ENCODE measurements at regions of chr3 and their contacts with region 1.

Region 1: DNA sequence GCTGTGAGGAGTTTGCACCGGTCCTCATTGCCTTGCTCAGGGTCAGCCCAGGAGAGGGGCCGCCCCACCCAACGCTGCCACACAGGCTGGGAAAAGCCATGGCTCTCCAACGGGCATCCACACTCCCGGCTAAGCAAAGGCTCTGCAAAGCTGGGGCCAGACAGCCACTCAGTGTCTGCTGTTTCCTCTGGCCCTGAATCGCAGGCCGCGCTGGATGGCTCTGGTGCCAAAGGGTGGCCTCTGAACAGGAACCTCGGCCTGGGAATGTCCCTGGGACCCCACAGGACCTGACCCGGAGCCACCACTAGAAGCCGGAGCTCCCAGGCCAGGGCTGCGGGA is 42.9 kb downstream of the RPN1 start:
- DNase-seq: no peak
- H3K4me3 ChIP-seq: peak overlapping the region in 2 of 3 experiments; percentile 48 to 53
- H3K27ac ChIP-seq: no peak overlapping the region
- H3K4me1 ChIP-seq: peaks cover 5% of the 10 kb centered on the region
- H3K27me3 ChIP-seq: no peaks in the 10 kb centered on the region
- CTCF ChIP-seq: no peak
- POLR2A ChIP-seq: no peak

Region 2: DNA sequence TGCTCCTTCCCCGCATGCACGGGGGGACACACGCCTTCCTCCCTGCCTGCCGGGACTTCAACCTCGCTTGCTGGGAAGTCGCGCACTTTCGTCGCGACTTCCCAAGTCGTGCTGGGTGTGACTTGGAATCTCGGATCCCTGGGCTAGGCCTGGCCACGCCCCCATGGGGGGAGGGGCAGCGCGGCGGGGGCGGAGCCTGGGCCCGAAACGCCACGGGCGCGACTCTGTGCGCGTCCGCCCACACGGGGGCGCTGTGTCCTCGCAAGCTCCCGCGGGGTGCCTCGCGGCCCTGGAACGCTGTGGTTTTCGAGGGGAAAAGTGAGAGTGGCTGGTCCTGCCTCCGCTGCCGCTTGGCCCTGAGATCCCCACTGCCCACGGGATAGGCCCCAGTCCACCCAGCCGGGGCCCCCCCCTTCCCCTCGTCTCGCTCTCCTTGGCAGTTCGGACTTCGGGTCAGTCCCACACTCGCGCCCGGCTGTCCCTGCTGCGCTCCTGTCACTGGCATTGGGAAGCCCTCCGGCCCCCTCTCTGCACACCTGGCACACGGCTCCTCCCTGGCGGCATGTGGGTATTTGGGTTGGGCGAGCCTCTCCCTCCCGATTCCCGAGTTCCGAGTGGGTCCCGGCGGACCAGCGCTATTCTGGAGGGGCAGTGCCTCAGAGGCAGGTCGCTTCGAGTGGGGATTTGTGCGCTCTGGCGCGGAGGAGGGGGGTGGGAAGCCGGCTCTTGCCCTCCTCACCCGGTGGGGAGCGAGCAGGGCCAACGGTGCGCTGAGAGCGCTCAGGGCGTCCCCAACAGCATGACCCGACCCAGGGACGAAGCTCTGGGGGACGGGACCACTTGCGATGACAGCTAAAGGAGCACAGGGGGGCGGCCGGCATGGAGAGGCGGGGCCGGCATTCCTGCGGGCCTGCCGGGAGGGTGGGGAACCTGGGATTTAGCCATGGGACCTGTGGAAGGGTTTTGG is 531.9 kb before region 1 on chr3:
- CTCF ChIA-PET with region 1: no interaction called
- POLR2A ChIA-PET with region 1: no interaction called
- dilution Hi-C with region 1: no loop called
- intact Hi-C with region 1: loop called (anchors 2 kb)
- DNase-seq: peak; percentile 94
- H3K4me3 ChIP-seq: peak overlapping the region in 2 of 3 experiments; percentile 16 to 44
- H3K27ac ChIP-seq: peak overlapping the region; percentile 33
- H3K4me1 ChIP-seq: peaks cover 51% of the 10 kb centered on the region
- H3K27me3 ChIP-seq: no peaks in the 10 kb centered on the region
- CTCF ChIP-seq: peak; percentile 95 to 98
- POLR2A ChIP-seq: peak; percentile 55

Region 3: DNA sequence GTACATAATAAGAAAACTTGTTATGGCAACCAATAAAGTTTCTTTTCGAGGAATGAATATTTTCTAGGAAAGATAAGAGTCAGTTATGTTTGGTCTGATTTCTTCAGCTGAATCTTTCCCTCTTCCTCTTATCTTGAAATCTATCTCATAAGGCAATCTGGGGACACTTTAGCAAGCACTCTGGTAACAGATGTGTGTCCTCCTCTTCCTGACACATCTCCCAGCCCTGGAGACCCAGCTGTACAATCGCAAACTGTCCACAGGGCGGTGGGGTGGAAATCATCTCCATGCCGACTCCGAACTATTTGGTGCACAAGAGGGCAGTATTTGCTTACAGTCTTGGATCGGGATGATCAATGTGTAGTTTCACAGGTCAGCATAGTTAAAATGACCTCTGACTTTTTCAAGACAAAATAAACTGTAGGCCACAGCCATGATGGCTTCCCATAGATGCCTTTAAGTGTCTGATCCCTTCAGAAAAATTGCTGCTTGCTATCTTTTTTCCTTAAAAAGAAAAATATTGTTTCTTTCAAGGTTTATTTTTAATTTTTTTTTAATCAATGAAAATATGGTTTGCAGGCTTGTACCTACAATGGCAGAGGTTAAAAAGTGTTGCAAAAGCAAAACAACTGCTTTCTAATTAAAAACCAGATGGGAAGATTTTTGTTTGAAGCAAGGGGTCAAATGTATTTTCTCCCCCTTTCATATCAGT is 436.7 kb before region 1 on chr3:
- CTCF ChIA-PET with region 1: interaction called, 27 read pairs
- POLR2A ChIA-PET with region 1: no interaction called
- dilution Hi-C with region 1: no loop called
- intact Hi-C with region 1: loop called (anchors 1 kb)
- DNase-seq: peak; percentile 78
- H3K4me3 ChIP-seq: no peak overlapping the region
- H3K27ac ChIP-seq: no peak overlapping the region
- H3K4me1 ChIP-seq: no peaks in the 10 kb centered on the region
- H3K27me3 ChIP-seq: no peaks in the 10 kb centered on the region
- CTCF ChIP-seq: peak; percentile 73 to 83
- POLR2A ChIP-seq: no peak

Region 4: GRCh38 chr3:128226795-128227395 is 380.8 kb before region 1 on chr3:
- CTCF ChIA-PET with region 1: interaction called, 19 read pairs
- POLR2A ChIA-PET with region 1: no interaction called
- dilution Hi-C with region 1: no loop called
- intact Hi-C with region 1: loop called (anchors 1 kb)
- DNase-seq: peak; percentile 59
- H3K4me3 ChIP-seq: no peak overlapping the region
- H3K27ac ChIP-seq: no peak overlapping the region
- H3K4me1 ChIP-seq: no peaks in the 10 kb centered on the region
- H3K27me3 ChIP-seq: no peaks in the 10 kb centered on the region
- CTCF ChIP-seq: peak; percentile 89 to 98
- POLR2A ChIP-seq: no peak

Region 5: DNA sequence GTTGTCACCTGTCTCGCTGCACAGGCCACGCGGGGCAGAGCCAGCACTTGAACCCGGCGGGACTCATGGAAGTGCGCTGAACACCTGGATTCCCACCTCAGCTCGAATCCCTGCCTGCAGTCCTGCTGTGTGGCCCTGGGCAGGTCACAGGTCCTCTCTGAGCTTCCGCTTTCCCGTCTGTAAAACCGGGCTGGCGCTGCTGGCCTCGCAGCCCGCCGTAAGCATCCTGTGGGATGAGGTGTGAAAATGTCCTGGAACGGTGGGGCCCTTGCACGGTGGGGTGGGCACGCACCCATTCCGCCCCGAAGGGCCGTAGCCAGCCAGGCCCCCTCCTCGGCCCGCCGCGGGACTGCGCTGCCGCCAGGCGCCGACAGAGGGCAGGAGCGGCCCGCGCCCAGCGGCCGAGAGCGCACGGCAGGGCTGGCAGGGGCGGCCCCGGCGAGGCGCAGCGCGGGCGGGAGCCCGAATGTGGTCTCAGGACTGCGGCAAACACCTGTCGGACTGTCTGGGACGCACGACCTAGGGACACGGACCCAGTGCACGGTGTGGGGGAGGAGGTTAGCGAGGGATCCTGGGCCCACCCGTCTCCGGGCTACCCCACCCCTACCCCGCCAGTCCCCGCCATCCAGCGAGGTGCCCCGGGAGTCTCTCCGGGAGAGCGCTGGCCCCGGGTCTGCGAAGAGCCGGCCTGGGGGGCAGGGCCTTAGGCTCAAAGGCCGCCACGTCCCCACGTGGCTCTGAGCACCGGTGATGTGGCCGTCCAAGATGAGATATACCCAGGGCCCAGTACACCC is 181.4 kb before region 1 on chr3:
- CTCF ChIA-PET with region 1: interaction called, 76 read pairs
- POLR2A ChIA-PET with region 1: no interaction called
- dilution Hi-C with region 1: no loop called
- intact Hi-C with region 1: loop called (anchors 1 kb)
- DNase-seq: peak; percentile 41
- H3K4me3 ChIP-seq: no peak overlapping the region
- H3K27ac ChIP-seq: no peak overlapping the region
- H3K4me1 ChIP-seq: peaks cover 3% of the 10 kb centered on the region
- H3K27me3 ChIP-seq: peaks cover 0 to under 1% of the 10 kb centered on the region in 2 experiments
- CTCF ChIP-seq: peak; percentile 75 to 96
- POLR2A ChIP-seq: no peak

Region 6: GRCh38 chr3:128473180-128473519 is 134.5 kb before region 1 on chr3:
- CTCF ChIA-PET with region 1: no interaction called
- POLR2A ChIA-PET with region 1: no interaction called
- dilution Hi-C with region 1: no loop called
- intact Hi-C with region 1: no loop called
- DNase-seq: no peak
- H3K4me3 ChIP-seq: no peak overlapping the region
- H3K27ac ChIP-seq: no peak overlapping the region
- H3K4me1 ChIP-seq: no peaks in the 10 kb centered on the region
- H3K27me3 ChIP-seq: peaks cover 0 to 11% of the 10 kb centered on the region in 2 experiments
- CTCF ChIP-seq: no peak
- POLR2A ChIP-seq: no peak

Region 7: GRCh38 chr3:128489855-128490649 is 117.6 kb before region 1 on chr3:
- CTCF ChIA-PET with region 1: interaction called, 10 read pairs
- POLR2A ChIA-PET with region 1: no interaction called
- dilution Hi-C with region 1: no loop called
- intact Hi-C with region 1: no loop called
- DNase-seq: peak; percentile 77
- H3K4me3 ChIP-seq: peak overlapping the region; percentile 77 to 95 (median 83)
- H3K27ac ChIP-seq: peak overlapping the region; percentile 97
- H3K4me1 ChIP-seq: peaks cover 15% of the 10 kb centered on the region
- H3K27me3 ChIP-seq: no peaks in the 10 kb centered on the region
- CTCF ChIP-seq: no peak
- POLR2A ChIP-seq: no peak

Region 8: DNA sequence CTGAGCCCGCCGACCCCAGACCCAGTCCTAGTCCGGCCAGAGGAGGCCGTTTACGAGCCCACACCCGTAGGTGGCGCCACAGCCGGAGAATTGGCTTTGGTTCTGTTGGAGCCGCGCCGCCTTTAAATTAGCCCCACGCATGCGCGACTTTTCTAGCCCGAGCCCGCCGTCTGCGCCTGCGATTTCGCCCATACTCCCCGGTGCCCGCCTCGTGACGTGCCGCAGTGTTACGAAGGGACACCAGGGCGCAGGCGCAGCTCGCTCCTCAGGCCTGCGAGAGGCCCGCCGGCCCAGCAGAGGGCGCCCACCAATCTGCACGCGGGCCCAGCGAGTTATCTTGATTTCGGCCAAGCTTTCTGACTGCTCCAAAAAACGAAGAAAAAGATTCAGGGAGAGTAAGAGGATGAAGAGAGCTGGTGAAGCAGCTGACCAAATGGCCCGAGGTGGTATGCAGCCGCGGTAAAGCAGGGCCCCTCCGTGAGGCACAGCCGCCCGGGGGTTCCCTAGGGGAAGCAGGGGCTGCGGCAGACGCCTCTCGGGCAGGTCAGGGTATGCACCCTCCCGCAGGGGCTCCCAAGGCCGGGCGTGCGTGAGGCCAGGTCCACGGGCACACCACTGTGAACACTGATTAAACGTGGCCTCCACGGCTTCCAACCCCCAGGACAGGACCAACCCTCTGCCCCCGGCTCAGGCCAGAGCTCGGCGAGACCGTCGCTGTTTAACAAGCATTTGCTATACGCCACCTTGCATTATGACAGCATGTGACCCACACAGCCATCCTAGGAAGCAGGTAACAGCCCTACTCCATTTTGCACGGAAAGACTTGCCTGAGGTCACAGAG is 10.1 kb after region 1 on chr3:
- CTCF ChIA-PET with region 1: interaction called, 29 read pairs
- POLR2A ChIA-PET with region 1: no interaction called
- dilution Hi-C with region 1: no loop called
- intact Hi-C with region 1: no loop called
- DNase-seq: peak; percentile 98
- H3K4me3 ChIP-seq: peak overlapping the region; percentile 48 to 65 (median 58)
- H3K27ac ChIP-seq: peak overlapping the region; percentile 53
- H3K4me1 ChIP-seq: peaks cover 35% of the 10 kb centered on the region
- H3K27me3 ChIP-seq: no peaks in the 10 kb centered on the region
- CTCF ChIP-seq: peak; percentile 86 to 98
- POLR2A ChIP-seq: no peak

Measured in endothelial cell of umbilical vein (primary cell).